HepG2 (cell line): ENCODE measurements at regions of chr2 and their contacts with region 1.

Region 1: DNA sequence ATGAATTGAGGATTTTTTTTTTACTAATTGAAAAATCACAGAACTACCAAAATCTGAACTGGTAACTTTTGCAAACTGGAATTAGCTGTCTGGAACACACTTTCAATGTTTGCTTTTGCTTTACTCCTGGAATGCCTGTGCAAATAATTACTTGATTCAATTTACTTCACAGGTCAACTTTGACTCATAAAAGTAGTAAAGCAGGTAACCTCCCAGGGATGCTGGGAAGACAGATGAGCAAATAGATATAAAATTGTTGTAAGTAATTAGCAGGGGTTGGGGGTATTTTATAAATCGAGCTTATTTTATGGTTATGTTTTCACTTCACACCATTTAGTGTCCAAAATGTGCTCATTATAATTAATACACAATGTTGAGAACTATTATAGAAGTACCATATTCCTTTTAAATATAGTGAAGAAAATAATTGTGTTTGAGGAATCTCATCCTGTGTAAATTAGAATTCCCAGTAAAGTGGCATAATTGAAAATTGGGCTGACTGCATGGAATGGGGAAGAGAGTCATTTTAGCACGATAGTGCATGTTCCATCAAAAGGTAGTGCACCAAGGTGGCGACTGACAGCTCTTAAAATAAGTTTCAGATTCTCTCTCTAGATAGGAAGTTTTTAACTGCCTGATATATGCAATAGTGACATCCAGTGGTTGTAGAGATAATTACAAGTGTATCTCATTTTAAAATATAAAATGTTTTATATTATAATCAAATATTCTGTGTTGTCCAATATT is 398.1 kb upstream of the HNRNPA3 start:
- DNase-seq: peak; percentile 10
- ATAC-seq: peak; percentile 37; the same call in 1 of the 3 replicates
- H3K4me3 ChIP-seq: no peak overlapping the region
- H3K27ac ChIP-seq: no peak overlapping the region
- H3K4me1 ChIP-seq: no peaks in the 10 kb centered on the region
- H3K27me3 ChIP-seq: peaks cover 0 to 15% of the 10 kb centered on the region in 2 experiments; a peak in 2 of 5 replicates
- CTCF ChIP-seq: peak; percentile 50
- EP300 ChIP-seq: no peak
- POLR2A ChIP-seq: no peak
- RAD21 ChIP-seq: no peak

Region 2: GRCh38 chr2:176653479-176654443 is 160.7 kb before region 1 on chr2:
- CTCF ChIA-PET with region 1: no interaction called
- POLR2A ChIA-PET with region 1: no interaction called
- in situ Hi-C with region 1: no loop called
- intact Hi-C with region 1: loop called (anchors 10 kb)
- DNase-seq: peak; percentile 57
- ATAC-seq: peak; percentile 94
- H3K4me3 ChIP-seq: no peak overlapping the region
- H3K27ac ChIP-seq: no peak overlapping the region
- H3K4me1 ChIP-seq: no peaks in the 10 kb centered on the region
- H3K27me3 ChIP-seq: peaks cover 0 to 15% of the 10 kb centered on the region in 2 experiments; a peak in 2 of 5 replicates
- CTCF ChIP-seq: peak; percentile 52
- EP300 ChIP-seq: no peak
- POLR2A ChIP-seq: no peak
- RAD21 ChIP-seq: 0 out of 2 replicates have a peak, but pooled peaks have one; percentile 22

Region 3: DNA sequence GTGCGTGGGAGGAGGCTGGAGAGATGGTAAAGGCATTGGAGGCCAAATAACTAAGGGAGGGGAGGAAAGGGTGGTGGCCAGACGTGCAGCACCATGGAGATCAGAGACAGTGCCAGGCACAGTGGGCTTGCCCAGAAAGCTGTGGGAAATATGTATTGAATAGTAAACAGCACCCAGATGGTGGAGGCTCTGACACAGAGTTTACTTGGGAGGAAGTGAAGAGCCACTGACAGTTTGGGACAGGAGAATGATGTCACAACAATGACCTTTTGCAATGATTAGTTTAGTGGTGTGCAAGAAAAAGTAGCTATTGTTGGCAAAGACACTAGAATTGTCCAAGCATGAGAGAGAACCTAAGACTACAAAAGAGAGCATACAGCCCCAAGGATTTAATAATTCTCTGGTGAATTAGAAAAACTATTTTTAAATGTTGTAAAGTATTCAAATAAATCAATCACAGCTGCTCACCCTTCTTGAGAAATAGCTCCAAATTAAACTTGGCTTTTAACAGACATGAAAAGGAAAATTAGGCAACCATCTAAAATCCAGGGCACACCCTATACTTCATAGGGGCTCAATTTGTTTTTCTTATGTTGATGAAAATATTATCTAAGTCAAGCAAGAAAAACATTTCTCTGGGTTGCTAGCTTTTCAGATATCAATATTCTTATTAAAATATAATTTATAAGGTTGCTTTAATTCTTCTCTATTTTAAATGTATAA is 60.6 kb before region 1 on chr2:
- CTCF ChIA-PET with region 1: no interaction called
- POLR2A ChIA-PET with region 1: no interaction called
- in situ Hi-C with region 1: no loop called
- intact Hi-C with region 1: no loop called
- DNase-seq: no peak
- ATAC-seq: no peak
- H3K4me3 ChIP-seq: no peak overlapping the region
- H3K27ac ChIP-seq: no peak overlapping the region
- H3K4me1 ChIP-seq: no peaks in the 10 kb centered on the region
- H3K27me3 ChIP-seq: no peaks in the 10 kb centered on the region; a peak in 1 of 5 replicates
- CTCF ChIP-seq: no peak
- EP300 ChIP-seq: no peak
- POLR2A ChIP-seq: no peak
- RAD21 ChIP-seq: no peak